Posterior vena cava (tissue), 2 donors: ENCODE measurements at regions of chr3 and their contacts with region 1.

Region 1: DNA sequence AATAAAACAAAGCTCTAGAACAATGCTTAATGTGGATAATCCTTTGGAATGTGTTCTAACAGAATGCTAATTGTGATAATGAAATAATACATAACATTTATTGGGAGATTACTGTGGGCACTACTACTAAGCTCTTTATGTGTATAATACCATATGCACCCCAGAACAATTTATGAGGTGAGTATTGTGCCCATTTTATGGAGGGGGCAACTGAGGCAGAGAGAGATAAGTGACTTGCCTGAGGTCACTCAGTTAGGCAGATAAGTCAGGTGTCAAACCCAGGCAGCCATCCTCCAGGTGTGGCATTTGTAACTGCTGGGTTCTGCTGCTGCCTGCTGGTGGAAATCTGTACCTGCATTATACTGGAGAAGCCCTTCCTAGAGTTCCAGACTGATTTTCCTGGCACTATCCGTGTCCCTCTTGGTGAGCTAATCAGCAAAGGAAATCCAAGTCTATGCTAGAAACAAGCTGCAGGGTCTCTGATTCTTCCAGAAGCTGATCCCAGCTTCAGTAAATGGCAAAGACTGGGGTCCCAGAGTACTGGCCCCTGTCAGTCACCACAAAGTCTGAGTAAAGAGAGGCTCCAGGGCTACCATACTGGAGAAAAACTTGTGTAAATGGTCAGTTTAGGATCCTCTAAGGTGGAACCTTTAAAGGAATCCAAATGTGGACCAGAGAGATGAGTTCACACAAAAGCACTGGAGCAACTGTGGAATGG is 22.6 kb upstream of the RBP1 start:
- DNase-seq: no peak

Region 2: DNA sequence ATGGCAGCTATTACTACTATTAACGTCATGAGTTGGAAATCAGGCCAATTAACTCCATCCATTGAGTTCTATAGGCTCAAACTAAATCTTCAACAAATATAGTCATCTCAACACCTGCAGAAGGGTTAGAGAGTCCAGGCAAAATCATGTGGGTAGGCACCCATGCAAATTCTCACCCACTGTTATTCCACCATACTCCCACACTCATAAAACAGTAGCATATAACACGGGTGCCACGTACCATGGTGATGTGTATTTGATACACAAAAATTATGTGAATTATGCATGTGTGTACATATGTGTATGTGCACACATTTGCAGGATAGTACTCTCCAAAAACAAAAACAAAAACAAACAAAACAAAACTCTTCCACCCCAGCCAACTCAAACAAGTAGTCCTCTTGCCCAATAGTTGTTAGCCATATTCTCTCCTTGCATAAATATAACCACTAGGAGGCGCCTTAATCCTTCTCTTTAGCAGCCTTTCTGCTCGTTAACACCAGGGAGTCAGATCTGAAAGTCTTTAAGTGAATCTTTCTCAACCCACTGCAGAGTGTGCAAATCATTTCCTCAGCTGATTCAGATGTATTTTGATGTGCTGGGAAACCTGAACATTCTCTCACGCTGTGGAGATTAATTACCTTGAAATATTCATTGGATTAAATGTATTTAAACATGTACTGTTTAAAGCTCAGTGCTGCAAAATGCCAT is 134.7 kb before region 1 on chr3:
- intact Hi-C with region 1: loop called (anchors 5 kb)
- DNase-seq: no peak

Region 3: DNA sequence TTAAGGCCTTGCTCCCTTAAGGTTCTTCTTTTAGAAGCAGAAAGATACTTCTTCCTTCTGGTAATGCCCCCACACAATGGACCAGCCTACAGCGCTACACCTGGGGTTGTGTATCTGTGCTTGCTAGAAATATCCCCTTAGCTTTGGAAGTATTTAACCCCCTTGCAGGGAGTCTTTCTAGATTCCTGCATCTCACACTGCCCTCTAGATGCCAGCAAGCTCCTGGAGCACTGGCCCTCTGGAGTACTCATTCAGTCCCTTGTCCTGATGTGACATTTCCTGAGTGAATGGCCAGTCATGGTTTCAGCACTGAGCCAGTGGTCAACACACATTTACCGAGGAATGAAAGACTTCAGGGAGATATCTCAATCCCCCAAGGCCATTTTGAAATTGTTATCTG is 55.4 kb before region 1 on chr3:
- intact Hi-C with region 1: loop called in 1 of 2 experiments (anchors 2 kb)
- DNase-seq: no peak

Region 4: GRCh38 chr3:139655909-139656595 is 93.9 kb after region 1 on chr3:
- intact Hi-C with region 1: no loop called
- DNase-seq: no peak